Colonic mucosa (tissue), 4 donors: ENCODE measurements at regions of chr18 and their contacts with region 1.

Region 1: DNA sequence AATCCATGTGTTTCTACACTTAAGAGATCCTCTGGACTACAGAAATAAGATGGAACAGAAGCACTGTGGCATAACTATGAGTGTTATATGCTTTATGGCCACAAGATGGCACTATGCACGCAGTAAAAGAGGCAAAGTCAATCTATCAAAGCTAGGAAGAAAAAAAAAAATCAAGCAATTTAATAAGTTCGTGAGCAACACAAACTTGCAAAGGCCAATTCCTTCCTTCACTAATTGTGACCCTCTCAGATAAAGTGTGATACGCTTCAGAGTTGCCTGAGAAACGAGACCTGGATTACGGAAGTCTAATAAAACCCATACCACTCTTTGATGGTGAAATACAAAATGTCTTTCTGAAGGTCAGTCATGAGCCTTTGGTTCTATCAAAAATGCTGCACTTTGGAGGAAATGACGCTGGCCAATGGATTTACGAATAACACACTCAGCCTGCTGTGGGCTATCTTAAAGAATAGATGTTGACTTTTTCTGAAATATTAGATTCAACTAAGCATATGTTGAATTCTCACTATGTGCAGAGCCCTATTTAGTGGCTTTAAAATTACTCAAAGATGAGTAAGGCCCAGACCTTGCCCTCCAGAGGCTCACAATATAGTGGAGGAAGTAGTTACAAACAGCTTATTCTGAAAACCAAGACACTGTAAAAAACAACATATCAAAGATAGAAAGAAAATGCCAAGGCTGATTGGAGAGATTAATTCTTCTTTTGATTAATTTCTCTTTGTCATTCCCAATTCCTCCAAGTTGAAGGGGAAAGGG is 35.5 kb upstream of the TTR start:
- DNase-seq: peak; percentile 56
- H3K4me3 ChIP-seq: no peak overlapping the region
- H3K27ac ChIP-seq: no peak overlapping the region
- H3K4me1 ChIP-seq: no peaks in the 10 kb centered on the region
- H3K27me3 ChIP-seq: no peaks in the 10 kb centered on the region
- CTCF ChIP-seq: peak; percentile 76

Region 2: DNA sequence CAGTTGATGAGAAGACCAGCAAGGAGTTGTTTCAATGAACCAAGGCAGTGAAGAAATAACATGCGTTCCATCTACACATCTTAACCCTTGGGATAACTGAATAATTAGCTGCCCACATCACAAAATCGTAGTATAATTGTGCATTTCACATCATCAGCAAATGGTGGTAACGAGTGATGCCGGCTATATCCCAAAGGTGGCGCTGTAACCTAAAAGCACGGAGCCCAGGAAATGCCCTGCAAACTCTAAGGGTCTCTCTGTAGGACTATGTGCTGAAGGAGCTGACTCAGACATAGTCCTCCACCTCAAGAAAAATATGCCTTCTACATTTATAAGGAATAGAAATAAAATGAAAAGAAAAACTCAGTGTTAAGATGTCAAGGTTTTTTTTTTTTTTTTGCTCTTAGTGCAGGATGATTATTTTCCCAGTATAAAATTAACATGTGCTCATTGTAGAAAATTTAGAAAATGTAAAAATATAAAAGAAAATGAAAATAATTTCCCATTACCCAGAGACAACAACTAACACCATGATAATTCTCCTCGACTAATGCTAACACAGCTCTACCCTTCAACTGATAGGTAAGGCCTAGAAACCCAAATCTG is 131.7 kb before region 1 on chr18:
- intact Hi-C with region 1: loop called (anchors 10 kb)
- DNase-seq: peak; percentile 57
- H3K4me3 ChIP-seq: no peak overlapping the region
- H3K27ac ChIP-seq: no peak overlapping the region
- H3K4me1 ChIP-seq: no peaks in the 10 kb centered on the region
- H3K27me3 ChIP-seq: no peaks in the 10 kb centered on the region
- CTCF ChIP-seq: peak; percentile 59

Region 3: DNA sequence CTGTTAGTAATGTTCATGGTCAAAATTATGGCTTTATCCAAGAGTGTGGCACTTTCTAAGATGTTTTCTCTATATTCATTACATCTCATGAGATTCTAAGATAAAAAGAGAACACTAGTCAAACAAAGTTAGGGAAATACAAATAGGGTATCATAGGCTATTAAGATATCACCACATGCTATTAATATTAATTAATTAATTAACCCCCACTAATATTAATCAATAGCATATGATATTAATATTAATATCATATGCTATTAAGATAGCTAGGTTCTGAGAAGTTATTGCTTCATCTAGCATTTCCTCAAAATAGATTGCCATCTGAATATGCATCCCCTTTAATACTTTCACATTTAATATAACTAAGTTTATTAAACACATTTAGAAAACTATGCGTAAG is 86.5 kb before region 1 on chr18:
- intact Hi-C with region 1: no loop called
- DNase-seq: no peak
- H3K4me3 ChIP-seq: no peak overlapping the region
- H3K27ac ChIP-seq: no peak overlapping the region
- H3K4me1 ChIP-seq: no peaks in the 10 kb centered on the region
- H3K27me3 ChIP-seq: no peaks in the 10 kb centered on the region
- CTCF ChIP-seq: no peak

Region 4: DNA sequence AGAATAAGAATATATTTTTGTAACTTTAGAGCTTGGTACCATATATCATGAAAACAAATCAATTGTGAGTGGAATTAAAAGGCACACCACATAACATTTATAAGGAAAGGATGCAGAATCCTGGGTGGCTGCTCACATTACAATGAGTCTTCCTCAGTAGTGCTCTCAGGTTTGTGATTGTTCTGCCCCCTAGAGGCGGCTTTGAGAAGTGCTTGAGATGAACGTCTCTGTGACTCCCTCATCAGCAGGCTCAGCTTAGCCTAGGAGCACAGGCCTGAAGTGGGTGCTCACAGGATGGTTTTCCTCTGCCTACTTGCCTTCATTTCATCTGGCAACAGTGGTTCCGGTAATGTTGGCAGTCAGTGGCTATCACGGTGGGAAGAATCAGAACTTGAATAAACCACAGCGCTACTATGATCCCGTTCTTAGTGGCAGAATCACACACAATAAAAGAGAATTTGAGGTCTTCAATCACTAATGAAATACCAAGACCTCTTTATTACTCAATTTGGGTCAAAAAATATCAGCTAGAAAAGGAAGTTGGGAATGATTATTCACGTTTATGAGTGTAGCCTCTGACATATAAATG is 166.3 kb after region 1 on chr18:
- intact Hi-C with region 1: loop called (anchors 2 kb)
- DNase-seq: peak; percentile 91
- H3K4me3 ChIP-seq: no peak overlapping the region
- H3K27ac ChIP-seq: no peak overlapping the region
- H3K4me1 ChIP-seq: no peaks in the 10 kb centered on the region
- H3K27me3 ChIP-seq: no peaks in the 10 kb centered on the region
- CTCF ChIP-seq: peak; percentile 86

Region 5: GRCh38 chr18:31819106-31819924 is 263.2 kb after region 1 on chr18:
- intact Hi-C with region 1: loop called (anchors 2 kb)
- DNase-seq: peak; percentile 19
- H3K4me3 ChIP-seq: no peak overlapping the region
- H3K27ac ChIP-seq: no peak overlapping the region
- H3K4me1 ChIP-seq: no peaks in the 10 kb centered on the region
- H3K27me3 ChIP-seq: no peaks in the 10 kb centered on the region
- CTCF ChIP-seq: peak; percentile 63